ENCODE measurements at regions of chr18 and their contacts with region 1.

Region 1: GRCh38 chr18:42092848-42093247 is 137.8 kb downstream of the PIK3C3 start:
- DNase-seq: no peak

Region 2: DNA sequence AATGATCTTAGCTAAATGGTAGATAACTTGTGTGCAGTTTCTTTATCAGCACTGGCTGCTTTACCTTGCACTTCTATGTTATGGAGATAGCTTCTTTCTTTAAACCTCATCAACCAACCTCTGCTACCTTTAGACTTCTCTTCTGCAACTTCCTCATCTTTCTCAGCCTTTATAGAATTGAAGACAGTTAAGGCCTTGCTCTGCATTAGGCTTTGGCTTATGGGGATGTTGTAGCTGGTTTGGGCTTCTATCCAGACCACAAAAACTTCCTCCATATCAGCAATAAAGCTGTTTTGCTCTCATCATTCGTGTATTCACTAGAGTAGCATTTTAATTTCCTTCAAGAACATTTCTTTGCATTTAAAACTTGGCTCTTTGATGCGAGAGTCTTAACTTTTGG is 14.1 kb before region 1 on chr18:
- intact Hi-C with region 1: no loop called
- DNase-seq: no peak

Region 3: DNA sequence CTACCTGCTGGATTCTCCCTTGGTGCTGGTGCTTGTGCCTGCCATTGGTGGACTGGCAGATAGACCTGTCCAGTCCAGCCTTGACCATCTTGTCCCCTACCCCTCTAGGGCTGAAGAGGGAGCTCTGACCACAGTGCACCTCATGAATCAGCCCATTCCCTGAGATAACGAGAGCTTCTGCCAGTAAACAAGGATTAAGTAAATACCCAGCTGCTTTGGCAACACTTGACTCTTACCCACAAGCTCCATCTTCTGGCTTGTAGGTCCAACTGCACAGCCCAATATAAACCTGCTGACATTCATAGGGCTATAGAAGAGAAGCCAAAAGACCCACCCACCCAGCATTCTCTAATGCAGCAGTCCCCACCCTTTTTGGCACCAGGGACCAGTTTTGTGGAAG is 48.6 kb after region 1 on chr18:
- intact Hi-C with region 1: loop called in 1 of 2 experiments (anchors 1 kb)
- DNase-seq: no peak

Measured in posterior vena cava (tissue), 2 donors.